ENCODE measurements at regions of chr11 and their contacts with region 1.

Region 1: GRCh38 chr11:121417055-121417551 is 35.0 kb upstream of the SORL1 start:
- DNase-seq: peak; percentile 81 to 90 (median 85)
- ATAC-seq: peak; percentile 72 to 93 (median 86)
- H3K4me3 ChIP-seq: no peak overlapping the region
- H3K27ac ChIP-seq: peak overlapping the region in 8 of 12 donors; percentile 6 to 95 (median 36)
- H3K4me1 ChIP-seq: peaks cover 0 to 64% (median 13%) of the 10 kb centered on the region in 12 donors
- H3K27me3 ChIP-seq: no peaks in the 10 kb centered on the region
- CTCF ChIP-seq: no peak
- POLR2A ChIP-seq: no peak

Region 2: DNA sequence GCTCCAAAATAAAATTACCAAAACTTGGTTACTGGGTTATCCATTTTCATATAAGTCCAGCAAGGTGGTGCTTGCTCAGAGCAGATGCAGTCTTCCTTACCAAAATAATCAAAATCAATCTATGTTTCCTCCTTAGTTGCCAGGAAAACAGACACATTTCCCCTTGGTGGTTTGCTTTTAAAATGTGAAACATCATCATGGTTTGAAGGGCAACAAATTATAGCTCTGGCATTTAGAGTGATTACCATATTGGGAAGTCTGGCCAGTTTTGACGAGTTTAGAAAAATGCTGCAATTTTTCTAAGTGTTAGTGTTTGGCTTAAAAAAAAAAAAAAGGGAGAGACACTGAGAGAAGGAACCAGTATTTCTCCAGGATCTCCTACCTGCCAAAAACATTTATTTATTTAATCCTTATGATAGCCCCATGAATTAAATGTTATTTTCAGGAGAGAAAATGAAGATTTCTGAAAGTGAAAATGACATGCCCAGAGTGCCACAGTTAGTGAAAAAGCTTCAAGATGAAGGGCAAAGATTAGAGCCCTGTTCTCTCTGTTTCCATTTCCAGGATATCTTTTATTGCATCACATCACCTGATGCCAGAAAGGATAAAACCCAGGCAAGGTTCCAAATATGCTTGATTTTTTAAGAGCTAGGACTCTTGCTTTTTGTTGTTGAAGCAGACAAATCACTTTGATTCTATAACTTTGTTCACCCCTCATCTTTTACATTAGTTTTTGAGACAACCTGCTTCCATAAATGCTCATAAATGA is 422.8 kb before region 1 on chr11:
- intact Hi-C with region 1: no loop called
- DNase-seq: no peak
- ATAC-seq: no peak
- H3K4me3 ChIP-seq: no peak overlapping the region
- H3K27ac ChIP-seq: no peak overlapping the region
- H3K4me1 ChIP-seq: no peaks in the 10 kb centered on the region
- H3K27me3 ChIP-seq: peaks cover 0 to 25% (median 3%) of the 10 kb centered on the region in 9 donors
- CTCF ChIP-seq: no peak
- POLR2A ChIP-seq: no peak

Region 3: GRCh38 chr11:121334973-121335710 is 82.0 kb before region 1 on chr11:
- intact Hi-C with region 1: loop called in 1 of 10 experiments (anchors 10 kb)
- DNase-seq: no peak
- ATAC-seq: no peak
- H3K4me3 ChIP-seq: no peak overlapping the region
- H3K27ac ChIP-seq: no peak overlapping the region
- H3K4me1 ChIP-seq: peaks cover 0 to 35% (median 5%) of the 10 kb centered on the region in 12 donors
- H3K27me3 ChIP-seq: peaks cover 0 to 5% (median 0%) of the 10 kb centered on the region in 9 donors
- CTCF ChIP-seq: peak in 2 of 12 donors; percentile 7 to 17
- POLR2A ChIP-seq: no peak

Region 4: DNA sequence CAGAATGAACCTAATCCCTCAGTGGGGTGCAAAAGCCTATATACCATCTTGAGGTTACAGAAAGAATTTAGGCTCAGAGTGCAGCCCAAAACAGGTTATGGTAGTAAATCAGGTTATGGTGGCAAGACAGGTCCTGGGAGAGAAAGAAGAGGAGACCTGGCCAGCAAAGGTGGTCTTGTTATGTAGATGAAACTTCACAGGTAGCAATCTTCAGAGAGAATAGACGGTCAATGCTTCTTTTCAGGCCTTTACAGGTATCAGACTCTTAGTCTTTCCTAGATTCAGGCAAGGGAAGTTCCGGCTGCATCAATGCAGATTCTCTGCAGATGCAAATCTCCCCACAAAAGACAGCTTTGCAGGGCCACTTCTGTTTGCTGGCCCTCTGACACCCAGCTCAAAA is 10.8 kb before region 1 on chr11:
- intact Hi-C with region 1: no loop called
- DNase-seq: no peak
- ATAC-seq: no peak
- H3K4me3 ChIP-seq: no peak overlapping the region
- H3K27ac ChIP-seq: peak overlapping the region in 1 of 12 donors; percentile 43
- H3K4me1 ChIP-seq: peaks cover 0 to 4% (median 0%) of the 10 kb centered on the region in 12 donors
- H3K27me3 ChIP-seq: no peaks in the 10 kb centered on the region
- CTCF ChIP-seq: no peak
- POLR2A ChIP-seq: no peak

Region 5: GRCh38 chr11:121572571-121573059 is 155.5 kb after region 1 on chr11:
- intact Hi-C with region 1: no loop called
- DNase-seq: no peak
- ATAC-seq: no peak
- H3K4me3 ChIP-seq: no peak overlapping the region
- H3K27ac ChIP-seq: no peak overlapping the region
- H3K4me1 ChIP-seq: peaks cover 0 to 32% (median 0%) of the 10 kb centered on the region in 12 donors
- H3K27me3 ChIP-seq: no peaks in the 10 kb centered on the region
- CTCF ChIP-seq: no peak
- POLR2A ChIP-seq: no peak

Region 6: DNA sequence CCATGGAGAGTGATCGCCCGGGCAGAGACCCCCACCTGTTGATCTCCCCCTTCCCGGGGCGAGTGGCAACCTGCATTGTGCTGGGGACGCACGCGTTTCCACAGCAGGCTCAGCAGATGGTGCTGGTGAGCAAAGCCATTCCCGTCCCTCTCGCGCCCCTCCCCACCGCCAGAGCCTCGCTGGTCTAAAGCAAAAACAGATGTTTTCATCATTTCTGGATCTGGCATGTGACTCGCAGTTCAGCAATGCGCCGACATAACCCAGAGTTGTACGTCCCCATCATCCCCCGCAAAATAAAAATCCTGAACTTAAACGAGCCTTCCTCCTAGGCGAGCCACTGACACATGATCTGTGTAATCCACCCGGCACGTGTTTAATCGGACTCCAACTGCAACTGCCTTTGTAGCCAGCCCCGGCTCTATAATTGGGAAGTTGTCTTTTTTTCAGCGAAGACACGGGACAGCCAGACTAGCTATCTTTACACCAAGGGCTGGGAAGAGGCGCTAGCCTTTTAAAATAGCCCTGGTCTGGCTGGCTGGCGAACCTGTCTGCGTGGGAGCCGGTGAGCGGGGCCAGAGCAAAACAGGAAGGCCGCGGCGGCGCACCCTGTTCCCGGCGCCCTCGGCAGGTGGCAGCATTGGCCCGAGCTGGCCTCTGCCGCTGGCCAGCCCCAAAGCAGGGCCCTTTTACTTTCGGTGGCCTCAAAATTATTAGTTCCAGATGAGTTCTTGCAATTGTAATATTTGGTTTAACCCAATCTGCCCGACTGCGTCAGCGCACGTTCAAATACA is 238.6 kb after region 1 on chr11:
- intact Hi-C with region 1: no loop called
- DNase-seq: peak; percentile 87 to 93 (median 91)
- ATAC-seq: peak; percentile 90 to 96 (median 94)
- H3K4me3 ChIP-seq: peak overlapping the region; percentile 12 to 62 (median 50)
- H3K27ac ChIP-seq: peak overlapping the region; percentile 82 to 96 (median 93)
- H3K4me1 ChIP-seq: peaks cover 0 to 21% (median 12%) of the 10 kb centered on the region in 12 donors
- H3K27me3 ChIP-seq: no peaks in the 10 kb centered on the region
- CTCF ChIP-seq: peak; percentile 76 to 89 (median 84)
- POLR2A ChIP-seq: no peak

Measured in heart left ventricle (tissue), 16 donors.